Heart right ventricle (tissue), 16 donors: ENCODE measurements at regions of chr6 and their contacts with region 1.

Region 1: GRCh38 chr6:53294095-53294494 is 54.7 kb downstream of the ELOVL5 start:
- DNase-seq: no peak
- ATAC-seq: peak in 3 of 8 donors; percentile 31 to 56 (median 45)
- H3K4me3 ChIP-seq: no peak overlapping the region
- H3K27ac ChIP-seq: peak overlapping the region in 1 of 10 donors; percentile 5
- H3K4me1 ChIP-seq: peaks cover 0 to 68% (median 43%) of the 10 kb centered on the region in 9 donors
- H3K27me3 ChIP-seq: no peaks in the 10 kb centered on the region
- CTCF ChIP-seq: peak; percentile 22 to 68 (median 56)

Region 2: DNA sequence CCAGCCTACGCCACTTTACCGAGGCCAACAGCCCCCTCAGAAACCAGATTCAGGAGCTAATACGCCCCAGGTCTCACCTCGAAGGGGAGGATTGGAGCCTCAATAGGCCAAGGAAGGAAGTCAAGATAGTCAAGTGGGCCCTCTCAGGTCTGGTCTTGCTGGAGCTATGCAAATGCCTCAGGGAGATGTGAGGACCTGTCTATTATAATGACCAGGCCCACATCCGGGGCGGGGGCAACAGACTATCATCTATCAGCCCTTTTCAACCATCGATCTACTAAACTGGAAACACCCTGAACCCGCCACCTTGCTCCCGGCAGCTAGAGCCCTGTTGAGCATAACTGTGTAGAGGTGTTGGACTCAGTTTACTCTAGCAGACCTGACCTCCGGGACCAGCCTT is 371.9 kb before region 1 on chr6:
- intact Hi-C with region 1: no loop called
- DNase-seq: no peak
- ATAC-seq: no peak
- H3K4me3 ChIP-seq: no peak overlapping the region
- H3K27ac ChIP-seq: no peak overlapping the region
- H3K4me1 ChIP-seq: peaks cover 0 to 3% (median 0%) of the 10 kb centered on the region in 9 donors
- H3K27me3 ChIP-seq: no peaks in the 10 kb centered on the region
- CTCF ChIP-seq: no peak

Region 3: GRCh38 chr6:53410508-53411258 is 116.6 kb after region 1 on chr6:
- intact Hi-C with region 1: loop called in 2 of 10 experiments (anchors 10 kb)
- DNase-seq: peak; percentile 34 to 36
- ATAC-seq: peak; percentile 67 to 92 (median 86)
- H3K4me3 ChIP-seq: no peak overlapping the region
- H3K27ac ChIP-seq: no peak overlapping the region
- H3K4me1 ChIP-seq: peaks cover 0 to 18% (median 0%) of the 10 kb centered on the region in 9 donors
- H3K27me3 ChIP-seq: no peaks in the 10 kb centered on the region
- CTCF ChIP-seq: peak; percentile 35 to 84 (median 75)